A673 (cell line): ENCODE measurements at regions of chr9 and their contacts with region 1.

Region 1: DNA sequence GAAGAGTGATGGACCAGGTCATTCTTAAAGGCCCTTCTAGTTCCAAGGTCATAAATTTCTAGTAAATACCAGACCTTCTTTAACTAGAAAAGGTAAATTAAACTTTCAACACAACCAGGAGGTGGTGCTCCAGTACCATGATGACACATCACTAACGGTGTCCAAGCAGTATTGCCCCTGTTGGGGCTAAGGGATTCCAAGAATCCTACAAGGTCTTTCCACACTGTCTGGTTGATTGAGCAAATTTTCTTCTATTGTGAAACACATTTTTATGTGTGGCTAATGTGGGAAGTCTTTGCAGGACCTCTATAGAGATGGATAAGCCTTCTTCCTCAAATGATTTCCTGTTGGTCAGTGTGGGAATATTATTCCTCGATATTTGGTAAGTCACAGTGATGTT is 459.6 kb upstream of the PAPPA start:
- DNase-seq: peak; percentile 89
- H3K4me3 ChIP-seq: no peak overlapping the region
- H3K27ac ChIP-seq: peak overlapping the region; percentile 54
- H3K4me1 ChIP-seq: peaks cover 24% of the 10 kb centered on the region
- H3K27me3 ChIP-seq: no peaks in the 10 kb centered on the region
- CTCF ChIP-seq: peak; percentile 57

Region 2: DNA sequence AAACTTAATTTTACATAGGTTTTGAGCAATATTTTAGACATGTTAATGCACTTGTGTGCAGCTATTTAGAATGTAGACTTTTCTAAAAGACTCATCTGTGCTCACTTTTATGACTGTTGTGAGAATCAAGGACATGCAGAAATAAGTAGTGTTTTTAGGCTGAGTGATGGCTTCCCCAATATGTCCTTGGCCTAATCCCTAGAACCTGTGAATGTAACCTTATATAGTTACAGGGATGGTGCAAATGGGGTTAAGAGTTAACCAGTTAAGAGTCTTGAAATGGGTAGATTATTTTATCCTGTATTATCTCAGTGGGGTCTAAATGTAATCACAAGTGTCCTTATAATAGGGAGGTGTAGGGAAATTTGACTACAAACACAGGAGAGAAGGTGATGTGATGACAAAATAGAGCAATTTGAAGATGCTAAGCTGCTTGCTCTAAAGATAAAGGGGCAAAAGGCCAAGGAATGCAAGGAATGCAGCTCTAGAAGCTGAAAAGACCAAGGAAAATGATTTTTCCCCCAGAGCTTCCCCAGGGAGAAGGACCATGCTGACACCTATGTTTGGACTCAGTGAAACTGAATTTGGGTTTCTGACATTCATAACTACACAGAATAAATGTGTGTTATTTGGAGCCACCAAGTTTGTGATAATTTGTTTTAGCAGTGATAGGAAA is 161.6 kb after region 1 on chr9:
- CTCF ChIA-PET with region 1: no interaction called
- POLR2A ChIA-PET with region 1: no interaction called
- intact Hi-C with region 1: loop called (anchors 2 kb)
- DNase-seq: peak; percentile 69
- H3K4me3 ChIP-seq: no peak overlapping the region
- H3K27ac ChIP-seq: peak overlapping the region; percentile 68
- H3K4me1 ChIP-seq: peaks cover 55% of the 10 kb centered on the region
- H3K27me3 ChIP-seq: no peaks in the 10 kb centered on the region
- CTCF ChIP-seq: no peak

Region 3: GRCh38 chr9:116156621-116157314 is 462.8 kb after region 1 on chr9:
- CTCF ChIA-PET with region 1: interaction called, 3 read pairs
- POLR2A ChIA-PET with region 1: no interaction called
- intact Hi-C with region 1: loop called (anchors 5 kb)
- DNase-seq: peak; percentile 92
- H3K4me3 ChIP-seq: peak overlapping the region; percentile 81
- H3K27ac ChIP-seq: peak overlapping the region; percentile 92
- H3K4me1 ChIP-seq: peaks cover 42% of the 10 kb centered on the region
- H3K27me3 ChIP-seq: no peaks in the 10 kb centered on the region
- CTCF ChIP-seq: no peak

Region 4: GRCh38 chr9:116572095-116572748 is 878.2 kb after region 1 on chr9:
- CTCF ChIA-PET with region 1: no interaction called
- POLR2A ChIA-PET with region 1: no interaction called
- intact Hi-C with region 1: loop called (anchors 1 kb)
- DNase-seq: peak; percentile 82
- H3K4me3 ChIP-seq: no peak overlapping the region
- H3K27ac ChIP-seq: peak overlapping the region; percentile 58
- H3K4me1 ChIP-seq: peaks cover 21% of the 10 kb centered on the region
- H3K27me3 ChIP-seq: no peaks in the 10 kb centered on the region
- CTCF ChIP-seq: peak; percentile 99